Endothelial cell of umbilical vein (primary cell): ENCODE measurements at regions of chr12 and their contacts with region 1.

Region 1: DNA sequence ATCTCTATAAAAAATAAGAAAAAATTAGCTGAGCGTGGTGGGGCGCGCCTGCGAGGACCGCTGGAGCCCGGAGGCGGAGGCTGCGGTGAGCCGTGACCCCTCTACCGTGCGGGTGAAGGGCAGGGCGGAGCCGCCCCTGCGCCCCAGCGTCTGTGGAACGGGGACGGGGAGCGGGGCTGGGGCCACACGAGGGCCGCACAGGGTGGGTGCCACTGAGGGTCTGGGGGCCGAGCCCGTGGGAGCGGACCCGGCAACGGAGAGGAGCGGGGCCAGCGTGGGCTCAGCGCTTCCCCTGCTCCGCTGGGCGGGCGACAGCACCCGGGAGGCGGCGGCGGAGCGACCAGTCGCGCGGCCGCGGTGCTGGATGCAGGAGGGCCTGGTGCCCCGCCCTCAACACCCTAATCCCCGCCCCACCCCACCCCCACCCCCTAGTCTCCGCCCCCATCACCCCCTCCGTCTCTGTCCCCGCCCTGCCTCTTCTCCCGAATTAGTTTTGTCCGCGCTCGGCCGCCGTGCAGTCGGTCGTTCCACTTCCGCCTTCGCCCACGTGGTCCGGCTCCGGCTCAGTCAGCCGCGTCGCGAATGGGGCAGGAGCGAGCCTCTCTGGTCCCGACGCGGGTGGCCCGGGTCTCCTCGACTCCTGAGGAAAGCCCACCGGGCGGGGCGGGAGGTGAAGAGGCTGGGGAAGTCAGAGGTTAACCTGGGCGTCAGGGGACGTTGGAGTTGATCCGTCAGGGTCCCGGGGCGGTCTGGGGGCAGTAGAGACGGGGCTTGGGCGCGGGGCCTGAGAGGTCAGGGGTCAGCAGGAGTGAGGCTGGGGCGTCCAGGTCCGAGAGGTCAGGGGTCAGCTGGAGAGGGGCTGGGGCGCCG is at the start of gene PUS1:
- DNase-seq: peak; percentile 90
- H3K4me3 ChIP-seq: peak within 1 kb of the TSS; percentile 79 to 96 (median 96)
- H3K27ac ChIP-seq: peak within 1 kb of the TSS; percentile 57
- H3K4me1 ChIP-seq: peaks cover 8% of the 10 kb centered on the region
- H3K27me3 ChIP-seq: no peaks in the 10 kb centered on the region
- CTCF ChIP-seq: no peak
- POLR2A ChIP-seq: peak; percentile 73
- total RNA-seq, gene PUS1: 47.9 and 52.2 TPM in 2 replicates

Region 2: GRCh38 chr12:131894313-131894860 is 34.6 kb before region 1 on chr12 and contains the start of gene ULK1:
- CTCF ChIA-PET with region 1: no interaction called
- POLR2A ChIA-PET with region 1: no interaction called
- dilution Hi-C with region 1: no loop called
- intact Hi-C with region 1: loop called (anchors 1 kb)
- DNase-seq: peak; percentile 79
- H3K4me3 ChIP-seq: peak within 1 kb of the TSS; percentile 37 to 56 (median 52)
- H3K27ac ChIP-seq: peak within 1 kb of the TSS; percentile 60
- H3K4me1 ChIP-seq: peaks cover 9% of the 10 kb centered on the region
- H3K27me3 ChIP-seq: peaks cover 0 to 3% of the 10 kb centered on the region in 2 experiments
- CTCF ChIP-seq: no peak
- POLR2A ChIP-seq: peak; percentile 92
- total RNA-seq, gene ULK1: 37.8 and 38.2 TPM in 2 replicates

Region 3: GRCh38 chr12:131912518-131913294 is 16.2 kb before region 1 on chr12:
- CTCF ChIA-PET with region 1: no interaction called
- POLR2A ChIA-PET with region 1: no interaction called
- dilution Hi-C with region 1: no loop called
- intact Hi-C with region 1: loop called (anchors 2 kb)
- DNase-seq: peak; percentile 85
- H3K4me3 ChIP-seq: no peak overlapping the region
- H3K27ac ChIP-seq: peak overlapping the region; percentile 21
- H3K4me1 ChIP-seq: peaks cover 12% of the 10 kb centered on the region
- H3K27me3 ChIP-seq: no peaks in the 10 kb centered on the region
- CTCF ChIP-seq: no peak
- POLR2A ChIP-seq: no peak